ENCODE measurements at regions of chr4 and their contacts with region 1.

Region 1: GRCh38 chr4:70687821-70688794 is at the start of gene UTP3:
- DNase-seq: peak; percentile 92
- H3K4me3 Mint-ChIP-seq: peak within 1 kb of the TSS; percentile 97
- H3K27ac Mint-ChIP-seq: peak within 1 kb of the TSS; percentile 93
- H3K4me1 Mint-ChIP-seq: peaks cover 39% of the 10 kb centered on the region
- H3K27me3 Mint-ChIP-seq: no peaks in the 10 kb centered on the region
- total RNA-seq, gene UTP3: 28.7 to 28.9 TPM

Region 2: DNA sequence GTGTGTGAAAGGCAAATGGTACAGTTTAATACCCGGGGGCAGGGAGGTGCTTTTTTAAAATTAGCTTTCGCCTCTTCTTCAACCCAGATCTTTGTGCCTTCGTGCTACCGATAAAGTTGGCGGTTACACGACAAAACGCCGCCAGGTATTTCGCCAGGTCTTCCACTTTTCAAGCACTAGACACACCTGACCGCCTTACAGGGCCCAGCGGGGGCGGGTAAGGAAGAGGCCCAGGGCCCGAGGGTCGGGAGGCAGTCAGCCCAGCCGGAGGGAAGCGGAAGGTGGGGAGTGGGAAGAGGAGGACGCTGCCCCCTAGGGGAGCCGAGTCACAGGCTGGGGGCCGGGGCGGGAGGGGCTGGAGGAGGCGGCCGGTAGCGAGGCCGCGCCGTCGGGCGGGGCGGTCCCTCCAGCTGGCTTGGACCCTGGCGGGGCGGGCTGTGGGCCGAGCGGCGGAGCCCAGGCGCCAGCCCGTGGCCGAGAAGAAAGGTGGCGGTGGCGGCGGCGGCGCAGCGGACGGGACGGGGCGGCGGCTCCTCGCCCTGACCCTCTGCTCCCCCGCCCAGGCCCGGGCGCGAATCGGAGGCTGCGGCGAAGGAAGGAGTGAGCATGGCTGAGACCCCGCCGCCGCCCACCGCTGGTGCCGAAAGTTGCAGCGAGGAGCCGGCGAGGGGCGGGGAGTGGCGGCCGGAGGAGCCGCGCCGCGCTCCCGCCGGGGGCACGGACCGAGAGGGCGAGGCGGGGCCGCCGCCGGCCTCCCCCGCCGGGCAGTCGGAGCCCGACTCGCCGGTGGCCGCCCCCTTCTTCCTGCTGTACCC is 16.4 kb after region 1 on chr4:
- CTCF ChIA-PET with region 1: interaction called, 35 read pairs
- POLR2A ChIA-PET with region 1: interaction called, 36 read pairs
- DNase-seq: peak; percentile 59
- H3K4me3 Mint-ChIP-seq: peak overlapping the region; percentile 80
- H3K27ac Mint-ChIP-seq: peak overlapping the region; percentile 31
- H3K4me1 Mint-ChIP-seq: peaks cover 22% of the 10 kb centered on the region
- H3K27me3 Mint-ChIP-seq: no peaks in the 10 kb centered on the region

Region 3: GRCh38 chr4:71338846-71339593 is 650.9 kb after region 1 on chr4 and contains the start of gene SLC4A4:
- CTCF ChIA-PET with region 1: no interaction called
- POLR2A ChIA-PET with region 1: no interaction called
- DNase-seq: peak; percentile 20
- H3K4me3 Mint-ChIP-seq: no peak within 1 kb of the TSS
- H3K27ac Mint-ChIP-seq: no peak within 1 kb of the TSS
- H3K4me1 Mint-ChIP-seq: peaks cover 12% of the 10 kb centered on the region
- H3K27me3 Mint-ChIP-seq: peaks cover 5% of the 10 kb centered on the region
- total RNA-seq, gene SLC4A4: 2.3 to 3.1 TPM